BJ (cell line): ENCODE measurements at regions of chr9 and their contacts with region 1.

Region 1: GRCh38 chr9:76537150-76537646 is 78.2 kb downstream of the GCNT1 start:
- DNase-seq: no peak
- H3K4me3 ChIP-seq: no peak overlapping the region
- H3K27me3 ChIP-seq: no peaks in the 10 kb centered on the region
- CTCF ChIP-seq: no peak

Region 2: DNA sequence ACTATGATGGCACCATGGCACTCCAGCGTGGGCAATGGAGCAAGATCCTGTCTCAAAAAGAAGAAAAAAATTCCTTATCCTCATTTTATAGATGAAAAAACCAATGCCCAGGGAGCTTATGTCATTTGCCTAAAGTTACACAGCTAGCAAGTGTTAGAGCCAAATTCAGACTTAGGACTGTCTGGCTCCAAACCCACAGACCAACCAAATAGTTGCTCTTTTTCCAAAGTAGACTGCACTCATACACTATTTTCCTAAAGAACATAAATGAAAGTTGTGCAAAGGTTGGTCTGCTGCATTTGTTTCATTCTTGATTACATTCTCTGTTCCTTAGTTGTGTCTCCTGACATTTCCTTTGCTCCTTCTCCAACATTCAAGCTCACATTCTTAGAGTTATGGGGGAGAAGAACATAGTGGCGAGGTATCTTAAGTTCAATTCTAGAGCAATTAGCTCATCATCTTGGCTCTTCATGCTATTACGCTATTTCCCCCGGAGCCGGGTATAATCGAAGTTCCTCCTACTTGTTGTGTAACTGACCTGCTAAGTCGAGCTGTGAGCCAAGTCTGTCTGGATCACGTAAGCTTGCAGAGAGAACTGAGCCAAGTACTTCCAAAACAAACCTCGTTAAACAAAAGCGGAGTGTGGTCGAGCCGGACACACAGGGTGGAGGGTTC is 281.3 kb before region 1 on chr9:
- CTCF ChIA-PET with region 1: no interaction called
- POLR2A ChIA-PET with region 1: no interaction called
- DNase-seq: peak; percentile 99
- H3K4me3 ChIP-seq: no peak overlapping the region
- H3K27me3 ChIP-seq: no peaks in the 10 kb centered on the region; the same call in 1 of the 2 replicates
- CTCF ChIP-seq: no peak

Region 3: DNA sequence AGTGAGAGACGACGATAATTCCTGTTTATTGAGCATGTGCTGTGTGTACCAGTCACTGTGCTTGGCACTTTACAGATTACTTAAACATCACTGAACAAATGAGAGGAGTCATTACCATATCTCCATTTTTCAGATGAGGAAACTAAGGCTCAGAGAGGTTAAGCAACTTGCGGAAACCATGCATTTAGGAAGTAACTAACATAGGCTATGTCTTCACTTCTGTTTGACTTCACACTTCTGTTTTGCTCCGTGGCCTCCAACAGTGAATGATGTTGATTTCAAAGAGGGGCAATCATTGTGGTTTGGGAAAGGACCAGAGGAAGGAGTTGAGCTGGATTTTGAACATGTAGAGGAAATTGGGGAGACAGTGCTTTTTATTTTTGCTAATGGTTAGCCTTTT is 61.5 kb before region 1 on chr9:
- CTCF ChIA-PET with region 1: no interaction called
- POLR2A ChIA-PET with region 1: no interaction called
- DNase-seq: no peak
- H3K4me3 ChIP-seq: no peak overlapping the region
- H3K27me3 ChIP-seq: no peaks in the 10 kb centered on the region
- CTCF ChIP-seq: no peak

Region 4: DNA sequence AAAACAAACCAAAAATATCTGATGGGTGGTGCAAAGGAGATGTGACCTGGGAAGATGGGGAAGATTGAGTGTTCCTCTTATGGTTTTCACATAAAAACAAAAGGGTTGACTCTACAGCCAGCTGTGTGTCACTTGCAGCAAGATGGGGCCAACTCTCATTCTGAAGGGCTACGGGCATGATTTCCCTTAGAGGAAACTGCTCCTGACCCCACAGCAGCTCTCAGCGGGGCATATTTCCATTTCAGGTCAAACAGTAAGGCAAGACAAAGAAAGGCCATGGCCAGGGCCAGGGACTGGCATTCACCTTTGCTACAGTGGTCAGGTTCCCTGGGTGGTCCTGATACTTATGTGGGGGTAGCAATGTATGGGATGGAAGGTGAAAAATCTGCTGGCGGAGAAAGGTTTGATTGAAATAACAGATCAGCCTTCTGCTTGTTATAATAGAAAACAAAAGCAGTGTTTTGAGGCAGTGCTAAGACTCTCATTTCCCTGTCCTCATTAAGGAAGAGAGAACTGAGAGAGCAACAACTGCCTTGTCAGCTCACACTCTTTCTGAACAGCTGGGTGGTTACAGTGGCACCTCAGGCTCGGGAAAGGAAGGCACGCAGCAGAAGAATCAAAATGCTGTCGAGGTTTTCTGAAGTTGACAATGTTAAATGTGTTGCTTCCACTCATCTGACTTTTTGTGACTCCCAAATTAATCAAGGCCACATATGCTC is 106.4 kb after region 1 on chr9:
- CTCF ChIA-PET with region 1: no interaction called
- POLR2A ChIA-PET with region 1: no interaction called
- DNase-seq: no peak
- H3K4me3 ChIP-seq: no peak overlapping the region
- H3K27me3 ChIP-seq: no peaks in the 10 kb centered on the region
- CTCF ChIP-seq: no peak

Region 5: GRCh38 chr9:77149879-77150278 is 612.7 kb after region 1 on chr9:
- CTCF ChIA-PET with region 1: no interaction called
- POLR2A ChIA-PET with region 1: interaction called, 20 read pairs
- DNase-seq: no peak
- H3K4me3 ChIP-seq: no peak overlapping the region
- H3K27me3 ChIP-seq: peaks cover 4% of the 10 kb centered on the region; the same call in 1 of the 2 replicates
- CTCF ChIP-seq: no peak